Kidney (tissue), 22 donors: ENCODE measurements at regions of chr7 and their contacts with region 1.

Region 1: GRCh38 chr7:107879400-107880035 is 11.5 kb upstream of the DLD start:
- DNase-seq: peak in 3 of 5 donors; percentile 25 to 58 (median 48)
- H3K4me3 ChIP-seq: no peak overlapping the region
- H3K27ac ChIP-seq: no peak overlapping the region
- H3K4me1 ChIP-seq: no peaks in the 10 kb centered on the region
- H3K27me3 ChIP-seq: no peaks in the 10 kb centered on the region
- CTCF ChIP-seq: peak; percentile 63

Region 2: GRCh38 chr7:107743567-107744344 is 135.8 kb before region 1 on chr7 and contains the start of gene CBLL1:
- intact Hi-C with region 1: loop called (anchors 10 kb)
- DNase-seq: peak; percentile 97 to 99 (median 98)
- H3K4me3 ChIP-seq: peak within 1 kb of the TSS; percentile 85 to 86 (median 86)
- H3K27ac ChIP-seq: peak within 1 kb of the TSS; percentile 98 to 99
- H3K4me1 ChIP-seq: peaks cover 7 to 17% (median 9%) of the 10 kb centered on the region in 3 donors
- H3K27me3 ChIP-seq: no peaks in the 10 kb centered on the region
- CTCF ChIP-seq: peak; percentile 76
- total RNA-seq, gene CBLL1: 22.4 TPM

Region 3: DNA sequence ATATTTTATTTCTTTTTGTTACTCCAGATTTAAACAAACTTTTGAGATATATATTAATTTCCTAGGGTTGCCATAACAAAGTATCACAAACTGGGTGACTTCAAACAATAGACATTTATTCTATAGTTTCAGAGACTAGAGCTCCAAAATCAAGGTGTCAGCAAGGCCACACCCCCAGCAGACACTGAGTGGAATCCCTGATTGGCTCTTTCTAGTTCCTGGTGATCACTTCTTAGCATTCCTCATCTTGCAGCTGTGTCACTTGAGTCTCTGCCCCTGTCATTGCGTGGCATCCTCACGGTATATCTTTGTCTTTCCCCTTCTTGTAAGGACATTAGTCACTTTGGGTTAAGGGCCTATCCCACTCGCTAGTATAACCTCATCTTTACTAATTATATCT is 68.9 kb before region 1 on chr7:
- intact Hi-C with region 1: no loop called
- DNase-seq: no peak
- H3K4me3 ChIP-seq: no peak overlapping the region
- H3K27ac ChIP-seq: no peak overlapping the region
- H3K4me1 ChIP-seq: no peaks in the 10 kb centered on the region
- H3K27me3 ChIP-seq: no peaks in the 10 kb centered on the region
- CTCF ChIP-seq: no peak

Region 4: GRCh38 chr7:107836237-107837144 is 43.0 kb before region 1 on chr7:
- intact Hi-C with region 1: no loop called
- DNase-seq: no peak
- H3K4me3 ChIP-seq: no peak overlapping the region
- H3K27ac ChIP-seq: no peak overlapping the region
- H3K4me1 ChIP-seq: no peaks in the 10 kb centered on the region
- H3K27me3 ChIP-seq: no peaks in the 10 kb centered on the region
- CTCF ChIP-seq: no peak

Region 5: GRCh38 chr7:108030516-108030915 is 151.0 kb after region 1 on chr7:
- intact Hi-C with region 1: no loop called
- DNase-seq: no peak
- H3K4me3 ChIP-seq: no peak overlapping the region
- H3K27ac ChIP-seq: no peak overlapping the region
- H3K4me1 ChIP-seq: peaks cover 0 to 12% (median 0%) of the 10 kb centered on the region in 3 donors
- H3K27me3 ChIP-seq: no peaks in the 10 kb centered on the region
- CTCF ChIP-seq: no peak